PC-3 (cell line): ENCODE measurements at regions of chr13 and their contacts with region 1.

Region 1: DNA sequence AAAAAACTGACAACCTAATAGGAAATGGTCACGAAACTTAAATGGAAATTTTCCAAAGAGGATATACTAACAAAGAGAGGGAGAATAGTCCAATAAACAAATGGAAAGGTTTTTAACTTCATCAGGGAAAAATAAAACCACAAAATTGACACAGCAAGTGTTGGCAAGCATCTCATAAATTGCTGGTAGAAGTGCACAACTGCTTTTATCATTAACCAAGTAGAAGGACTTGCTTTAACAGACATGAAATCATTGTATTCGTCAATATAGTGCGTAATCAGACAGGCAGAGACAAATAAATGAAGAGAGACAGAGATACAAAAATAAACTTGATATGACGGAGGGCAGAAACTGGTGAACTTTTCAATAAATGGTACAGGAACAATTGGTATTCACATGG is 7.4 kb downstream of the TGDS start:
- DNase-seq: no peak
- ATAC-seq: no peak
- H3K4me3 ChIP-seq: no peak overlapping the region
- H3K27ac ChIP-seq: no peak overlapping the region
- H3K4me1 ChIP-seq: peaks cover 7% of the 10 kb centered on the region
- H3K27me3 ChIP-seq: no peaks in the 10 kb centered on the region
- CTCF ChIP-seq: no peak

Region 2: DNA sequence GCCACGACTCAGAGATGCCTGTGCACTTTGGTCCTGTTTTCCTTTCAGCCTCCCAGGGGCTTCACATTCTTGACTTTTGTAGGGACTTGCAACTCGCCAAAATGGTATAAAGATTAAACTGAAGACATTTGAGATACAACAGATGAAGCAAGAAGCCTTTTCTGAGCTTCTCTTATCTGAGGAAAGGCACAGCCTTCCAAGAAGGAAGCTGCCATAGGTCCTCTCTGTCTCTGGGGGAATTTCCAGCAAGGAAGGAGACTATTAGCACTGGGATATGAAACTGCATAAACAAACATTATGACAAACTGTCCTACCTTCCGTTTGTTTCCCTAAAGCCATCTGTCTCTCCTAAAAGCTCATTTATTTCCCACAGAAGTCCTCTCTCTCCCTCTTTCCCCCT is 31.9 kb before region 1 on chr13:
- CTCF ChIA-PET with region 1: no interaction called
- POLR2A ChIA-PET with region 1: interaction called, 13 read pairs
- intact Hi-C with region 1: no loop called
- DNase-seq: no peak
- ATAC-seq: peak; percentile 43
- H3K4me3 ChIP-seq: no peak overlapping the region
- H3K27ac ChIP-seq: no peak overlapping the region
- H3K4me1 ChIP-seq: peaks cover 5% of the 10 kb centered on the region; the same call in 1 of the 2 replicates
- H3K27me3 ChIP-seq: no peaks in the 10 kb centered on the region
- CTCF ChIP-seq: no peak

Region 3: GRCh38 chr13:95083758-95084157 is 495.2 kb after region 1 on chr13:
- CTCF ChIA-PET with region 1: no interaction called
- POLR2A ChIA-PET with region 1: no interaction called
- intact Hi-C with region 1: no loop called
- DNase-seq: peak; percentile 77
- ATAC-seq: peak; percentile 75
- H3K4me3 ChIP-seq: no peak overlapping the region
- H3K27ac ChIP-seq: peak overlapping the region; percentile 96
- H3K4me1 ChIP-seq: peaks cover 26% of the 10 kb centered on the region
- H3K27me3 ChIP-seq: no peaks in the 10 kb centered on the region
- CTCF ChIP-seq: no peak